Lower lobe of right lung (tissue), 2 donors: ENCODE measurements at regions of chr1 and their contacts with region 1.

Region 1: GRCh38 chr1:151994956-151995355 is 1.3 kb upstream of the S100A10 start:
- DNase-seq: no peak
- ATAC-seq: no peak
- H3K4me3 ChIP-seq: no peak overlapping the region
- H3K27ac ChIP-seq: peak overlapping the region; percentile 98
- H3K4me1 ChIP-seq: peaks cover 42% of the 10 kb centered on the region
- H3K27me3 ChIP-seq: no peaks in the 10 kb centered on the region
- CTCF ChIP-seq: no peak

Region 2: GRCh38 chr1:151820940-151821339 is 174.0 kb before region 1 on chr1:
- intact Hi-C with region 1: no loop called
- DNase-seq: no peak
- ATAC-seq: peak in 1 of 2 donors; percentile 18
- H3K4me3 ChIP-seq: no peak overlapping the region
- H3K27ac ChIP-seq: no peak overlapping the region
- H3K4me1 ChIP-seq: peaks cover 8% of the 10 kb centered on the region
- H3K27me3 ChIP-seq: no peaks in the 10 kb centered on the region
- CTCF ChIP-seq: no peak

Region 3: DNA sequence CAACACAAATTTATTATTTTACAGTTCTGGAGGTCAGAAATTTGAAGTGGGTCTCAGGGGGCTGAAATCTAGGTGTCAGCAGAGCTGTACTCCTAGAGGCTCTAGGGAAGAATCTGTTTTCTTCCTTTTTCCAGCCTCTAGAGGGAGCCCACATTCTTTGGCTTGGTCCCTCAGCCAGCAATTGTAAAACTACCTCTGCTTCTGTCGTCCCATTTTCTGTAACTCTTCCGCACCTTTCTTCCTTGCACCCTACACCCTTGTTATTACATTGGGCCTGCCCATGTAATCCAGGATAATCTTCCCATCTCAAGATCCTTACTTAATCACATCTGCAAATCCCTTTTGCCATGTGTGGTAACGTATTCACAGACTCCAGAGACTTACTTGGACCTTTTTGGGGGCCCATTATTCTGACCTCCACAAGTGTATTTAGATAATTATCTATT is 60.9 kb before region 1 on chr1:
- intact Hi-C with region 1: loop called (anchors 5 kb)
- DNase-seq: no peak
- ATAC-seq: peak; percentile 91 to 93
- H3K4me3 ChIP-seq: no peak overlapping the region
- H3K27ac ChIP-seq: no peak overlapping the region
- H3K4me1 ChIP-seq: no peaks in the 10 kb centered on the region
- H3K27me3 ChIP-seq: no peaks in the 10 kb centered on the region
- CTCF ChIP-seq: peak; percentile 83